PC-9 (cell line): ENCODE measurements at regions of chr1 and their contacts with region 1.

Region 1: DNA sequence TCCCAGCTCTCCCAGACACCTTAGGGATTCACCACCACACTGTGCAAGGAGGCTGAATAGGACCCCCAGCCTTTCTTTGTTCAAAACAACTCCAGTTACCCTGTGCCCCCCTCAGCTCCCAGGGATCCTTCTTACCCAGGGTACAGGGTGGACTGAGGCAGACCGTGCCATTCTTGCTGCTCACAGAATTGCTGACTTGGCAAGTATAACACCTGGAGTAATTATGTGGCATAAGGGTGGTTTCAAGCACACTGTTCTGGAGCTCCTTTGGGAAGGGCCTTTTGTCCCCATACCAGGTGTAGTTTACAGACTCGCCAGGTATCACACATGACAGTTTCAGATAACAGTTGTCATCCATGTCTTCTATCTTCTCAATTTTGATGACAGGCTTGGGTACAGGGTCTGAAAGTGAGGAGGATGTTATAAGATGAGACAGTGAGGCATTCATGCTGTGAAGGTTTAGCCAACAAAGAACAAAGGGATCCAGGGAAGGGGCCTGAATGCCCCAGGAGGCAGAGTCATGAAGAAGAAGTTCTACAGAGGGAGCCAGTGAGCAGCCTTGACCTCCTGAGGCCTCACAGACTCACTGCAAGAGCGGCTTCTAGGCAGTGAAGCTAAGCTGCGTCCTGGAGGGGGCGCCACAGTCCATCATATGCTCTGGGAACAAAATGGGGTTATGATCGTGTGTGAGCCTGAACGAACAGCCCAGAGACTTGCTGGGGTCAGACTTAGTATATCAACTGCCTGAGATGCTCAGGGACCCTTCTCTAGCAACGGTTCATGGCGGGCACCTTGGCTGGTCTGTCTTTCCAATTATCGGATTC is 30.3 kb downstream of the CD48 start:
- DNase-seq: peak in 1 of 2 experiments; percentile 79
- H3K4me3 ChIP-seq: no peak overlapping the region
- H3K27ac ChIP-seq: no peak overlapping the region
- H3K4me1 ChIP-seq: no peaks in the 10 kb centered on the region
- H3K27me3 ChIP-seq: peaks cover 49% of the 10 kb centered on the region
- CTCF ChIP-seq: peak; percentile 71

Region 2: DNA sequence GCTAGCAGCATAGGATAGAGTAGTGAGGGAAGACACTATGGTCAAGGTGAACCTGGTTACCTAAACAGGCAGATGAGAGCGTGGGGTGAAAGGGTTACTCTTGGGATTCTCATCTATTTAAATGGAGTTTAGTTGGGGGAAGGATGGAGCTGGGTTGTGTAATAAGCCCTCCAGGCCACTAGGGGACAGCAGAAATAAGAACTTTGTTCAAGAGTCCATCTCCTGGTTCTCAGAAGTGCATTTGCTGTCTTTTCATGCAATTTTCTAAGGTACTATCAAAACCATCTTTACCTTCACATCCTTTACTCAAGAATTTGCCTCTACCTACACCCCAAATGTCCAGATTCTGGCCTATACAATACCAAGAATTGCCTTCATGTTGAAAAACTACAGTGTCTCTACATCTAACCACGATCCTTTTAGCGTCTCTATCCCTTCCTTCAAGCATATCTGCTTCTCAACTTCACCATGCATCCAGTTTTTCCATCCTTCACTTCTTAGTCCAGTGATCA is 62.5 kb before region 1 on chr1:
- CTCF ChIA-PET with region 1: no interaction called
- POLR2A ChIA-PET with region 1: no interaction called
- intact Hi-C with region 1: no loop called
- DNase-seq: no peak
- H3K4me3 ChIP-seq: no peak overlapping the region
- H3K27ac ChIP-seq: no peak overlapping the region
- H3K4me1 ChIP-seq: no peaks in the 10 kb centered on the region
- H3K27me3 ChIP-seq: peaks cover 35% of the 10 kb centered on the region
- CTCF ChIP-seq: peak; percentile 68

Region 3: GRCh38 chr1:160726498-160727315 is 45.4 kb after region 1 on chr1:
- CTCF ChIA-PET with region 1: no interaction called
- POLR2A ChIA-PET with region 1: no interaction called
- intact Hi-C with region 1: loop called (anchors 2 kb)
- DNase-seq: peak; percentile 51 to 63
- H3K4me3 ChIP-seq: no peak overlapping the region
- H3K27ac ChIP-seq: peak overlapping the region; percentile 50
- H3K4me1 ChIP-seq: peaks cover 18% of the 10 kb centered on the region
- H3K27me3 ChIP-seq: no peaks in the 10 kb centered on the region
- CTCF ChIP-seq: peak; percentile 93

Region 4: DNA sequence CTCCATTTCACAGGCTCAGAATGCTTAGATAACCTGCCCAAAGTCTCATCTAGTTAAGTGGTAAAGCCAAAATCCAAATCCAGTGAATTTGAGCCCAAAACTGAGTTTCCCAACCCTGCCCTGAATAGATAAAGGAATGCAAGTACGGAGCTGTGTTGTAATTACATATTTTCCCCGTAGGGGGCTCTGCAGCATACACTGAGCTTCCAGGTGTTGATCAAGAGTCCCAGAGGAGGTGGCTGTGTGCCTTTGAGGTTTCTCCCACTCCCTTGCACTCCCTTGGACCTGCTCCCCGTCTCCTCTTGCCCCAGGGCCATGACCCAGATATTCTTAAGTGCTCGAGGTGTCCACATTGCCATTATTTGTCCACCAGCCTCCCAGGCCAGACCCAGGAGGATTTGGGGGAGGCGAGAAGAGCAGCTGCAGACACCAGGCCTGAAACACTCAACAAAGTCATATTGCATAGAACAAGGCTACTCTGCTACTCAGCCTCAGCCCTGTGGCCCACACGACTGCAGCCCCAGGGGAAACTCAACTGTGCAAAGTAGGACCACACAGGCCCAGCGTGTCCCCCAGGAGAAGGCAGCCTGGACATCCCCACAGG is 96.3 kb after region 1 on chr1:
- CTCF ChIA-PET with region 1: interaction called, 8 read pairs
- POLR2A ChIA-PET with region 1: no interaction called
- intact Hi-C with region 1: loop called (anchors 5 kb)
- DNase-seq: no peak
- H3K4me3 ChIP-seq: no peak overlapping the region
- H3K27ac ChIP-seq: no peak overlapping the region
- H3K4me1 ChIP-seq: peaks cover 39% of the 10 kb centered on the region
- H3K27me3 ChIP-seq: no peaks in the 10 kb centered on the region
- CTCF ChIP-seq: peak; percentile 51

Region 5: GRCh38 chr1:160837558-160838205 is 156.4 kb after region 1 on chr1:
- CTCF ChIA-PET with region 1: no interaction called
- POLR2A ChIA-PET with region 1: no interaction called
- intact Hi-C with region 1: loop called (anchors 5 kb)
- DNase-seq: peak; percentile 46 to 74
- H3K4me3 ChIP-seq: no peak overlapping the region
- H3K27ac ChIP-seq: no peak overlapping the region
- H3K4me1 ChIP-seq: peaks cover 4% of the 10 kb centered on the region; the same call in 1 of the 2 replicates
- H3K27me3 ChIP-seq: no peaks in the 10 kb centered on the region
- CTCF ChIP-seq: no peak

Region 6: DNA sequence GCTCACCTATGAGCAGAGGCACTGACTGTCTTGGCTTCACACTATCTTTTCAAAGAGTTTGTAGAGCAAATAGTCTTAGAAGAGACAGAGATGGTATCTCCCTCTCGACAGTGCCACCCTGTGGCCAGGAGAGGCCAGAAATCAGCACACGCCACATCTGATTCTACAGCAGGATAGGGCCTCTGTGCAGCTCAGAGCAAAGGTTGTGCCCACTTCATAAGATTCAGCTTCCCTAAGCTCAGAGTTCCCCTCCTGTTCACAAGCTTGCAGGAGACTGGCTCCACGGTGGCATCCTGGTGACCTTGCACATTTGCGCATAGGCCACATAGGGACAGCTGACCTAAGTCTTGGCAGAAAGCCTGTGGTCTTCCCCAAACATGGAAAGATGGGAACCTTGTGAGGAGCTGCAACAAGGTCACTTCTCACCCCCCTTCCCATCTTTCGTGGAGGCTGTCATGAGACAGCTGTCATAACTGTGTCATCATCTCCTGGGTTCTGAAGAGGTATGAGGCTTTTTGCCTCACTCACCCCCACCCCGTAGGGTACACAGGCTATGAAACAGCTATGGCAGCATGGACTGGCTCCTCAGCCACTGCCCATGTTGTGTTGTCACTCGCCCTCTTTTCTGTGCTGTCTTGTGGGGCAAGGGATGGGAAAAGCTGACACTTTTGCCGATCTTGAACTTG is 270.3 kb after region 1 on chr1:
- CTCF ChIA-PET with region 1: interaction called, 5 read pairs
- POLR2A ChIA-PET with region 1: no interaction called
- intact Hi-C with region 1: loop called (anchors 2 kb)
- DNase-seq: peak; percentile 40 to 62
- H3K4me3 ChIP-seq: no peak overlapping the region
- H3K27ac ChIP-seq: no peak overlapping the region
- H3K4me1 ChIP-seq: no peaks in the 10 kb centered on the region
- H3K27me3 ChIP-seq: no peaks in the 10 kb centered on the region
- CTCF ChIP-seq: peak; percentile 83

Region 7: DNA sequence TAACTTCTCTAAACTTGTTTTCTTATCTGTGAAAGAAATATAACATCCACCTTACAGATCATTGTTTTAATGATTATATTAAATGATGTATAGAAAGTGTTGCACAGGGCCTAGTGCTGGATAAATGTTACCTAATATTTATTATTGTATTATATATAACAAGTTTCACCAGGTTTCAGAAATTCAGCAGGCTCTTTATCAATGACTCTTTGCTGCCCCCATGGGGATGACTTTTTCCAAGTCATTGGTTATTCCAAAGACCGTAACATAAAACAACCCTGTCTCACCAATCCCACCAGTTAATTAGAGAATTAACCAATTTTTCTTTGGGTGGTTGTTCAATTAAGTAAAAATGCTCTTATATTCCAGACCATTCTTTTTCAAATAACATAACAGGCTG is 458.5 kb after region 1 on chr1:
- CTCF ChIA-PET with region 1: no interaction called
- POLR2A ChIA-PET with region 1: no interaction called
- intact Hi-C with region 1: loop called (anchors 2 kb)
- DNase-seq: peak in 1 of 2 experiments; percentile 37
- H3K4me3 ChIP-seq: no peak overlapping the region
- H3K27ac ChIP-seq: no peak overlapping the region
- H3K4me1 ChIP-seq: peaks cover 16% of the 10 kb centered on the region
- H3K27me3 ChIP-seq: no peaks in the 10 kb centered on the region
- CTCF ChIP-seq: peak; percentile 80

Region 8: DNA sequence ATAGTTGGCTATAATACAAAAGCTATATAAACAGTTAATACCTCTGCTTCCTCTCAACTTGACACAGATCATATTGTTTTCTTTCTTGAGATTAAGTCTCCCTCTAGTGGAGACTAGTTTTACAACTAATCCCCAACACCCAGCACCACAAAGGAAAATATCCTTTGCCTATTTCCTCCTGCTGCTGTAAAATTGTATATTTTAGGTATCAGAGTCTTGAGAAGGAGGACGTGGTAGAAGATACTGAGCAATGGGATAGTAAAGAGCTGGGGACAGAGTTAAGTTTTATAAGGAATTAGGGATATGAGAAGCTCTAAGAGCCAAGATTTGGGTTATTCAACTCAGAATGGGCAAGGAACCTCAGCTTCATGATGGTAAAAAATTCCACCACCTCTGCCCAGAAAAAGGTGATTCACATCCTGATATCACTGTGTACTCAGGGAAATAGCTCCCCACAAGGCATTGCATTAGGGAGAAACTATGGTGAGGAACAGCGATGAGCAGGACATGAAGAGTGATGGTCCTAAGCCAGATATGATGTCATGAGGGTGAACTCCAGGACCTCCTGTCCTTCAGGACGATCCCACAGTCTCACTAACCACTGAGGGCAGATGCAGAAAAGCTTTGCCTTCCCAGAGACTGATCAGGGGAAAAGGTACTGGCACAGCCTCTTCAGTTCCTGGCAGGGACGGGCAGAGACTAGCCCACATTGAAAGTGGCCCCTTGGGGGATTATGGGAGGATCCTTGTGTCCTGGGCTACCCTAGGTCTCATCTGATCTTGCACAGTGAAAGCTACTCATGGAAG is 701.1 kb after region 1 on chr1:
- CTCF ChIA-PET with region 1: interaction called, 9 read pairs
- POLR2A ChIA-PET with region 1: no interaction called
- intact Hi-C with region 1: loop called (anchors 5 kb)
- DNase-seq: peak in 1 of 2 experiments; percentile 78
- H3K4me3 ChIP-seq: peak overlapping the region; percentile 28; the same call in 1 of the 2 replicates
- H3K27ac ChIP-seq: peak overlapping the region; percentile 72
- H3K4me1 ChIP-seq: peaks cover 23% of the 10 kb centered on the region
- H3K27me3 ChIP-seq: no peaks in the 10 kb centered on the region
- CTCF ChIP-seq: peak; percentile 83

Region 9: DNA sequence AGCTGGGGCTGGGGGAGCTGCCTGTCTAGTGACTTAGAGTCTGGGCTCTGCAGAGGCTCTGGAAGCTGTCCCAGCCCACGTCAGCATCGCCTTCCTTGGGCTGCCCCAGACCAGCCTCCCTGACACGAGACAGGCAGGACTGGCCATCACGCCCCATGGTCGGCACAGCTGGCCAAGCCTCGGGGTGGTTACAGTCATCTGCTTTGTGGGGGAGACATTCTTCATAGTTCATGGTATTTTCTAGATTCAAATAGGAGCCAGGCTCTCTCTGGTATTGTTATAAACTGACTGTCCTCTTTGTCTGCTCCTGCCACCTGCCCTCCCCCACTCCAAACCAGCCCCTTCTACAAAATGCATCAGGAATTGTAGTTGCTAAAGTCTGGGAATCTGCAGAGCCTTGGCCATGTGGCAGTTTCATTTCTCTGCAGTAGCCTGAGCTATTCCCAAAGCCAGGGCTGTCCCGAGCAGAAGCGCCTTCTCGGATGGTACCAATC is 1312.9 kb after region 1 on chr1:
- CTCF ChIA-PET with region 1: no interaction called
- POLR2A ChIA-PET with region 1: no interaction called
- intact Hi-C with region 1: no loop called
- DNase-seq: no peak
- H3K4me3 ChIP-seq: no peak overlapping the region
- H3K27ac ChIP-seq: no peak overlapping the region
- H3K4me1 ChIP-seq: peaks cover 8% of the 10 kb centered on the region
- H3K27me3 ChIP-seq: peaks cover 8% of the 10 kb centered on the region; the same call in 1 of the 2 replicates
- CTCF ChIP-seq: no peak